Activated CD8-positive, alpha-beta T cell treated with anti-CD3 and anti-CD28 coated beads, Interleukin-2, amount 10 ng/mL, durations not matched to agents 7 days and 5 days (primary cell): ENCODE measurements at regions of chr11 and their contacts with region 1.

Region 1: DNA sequence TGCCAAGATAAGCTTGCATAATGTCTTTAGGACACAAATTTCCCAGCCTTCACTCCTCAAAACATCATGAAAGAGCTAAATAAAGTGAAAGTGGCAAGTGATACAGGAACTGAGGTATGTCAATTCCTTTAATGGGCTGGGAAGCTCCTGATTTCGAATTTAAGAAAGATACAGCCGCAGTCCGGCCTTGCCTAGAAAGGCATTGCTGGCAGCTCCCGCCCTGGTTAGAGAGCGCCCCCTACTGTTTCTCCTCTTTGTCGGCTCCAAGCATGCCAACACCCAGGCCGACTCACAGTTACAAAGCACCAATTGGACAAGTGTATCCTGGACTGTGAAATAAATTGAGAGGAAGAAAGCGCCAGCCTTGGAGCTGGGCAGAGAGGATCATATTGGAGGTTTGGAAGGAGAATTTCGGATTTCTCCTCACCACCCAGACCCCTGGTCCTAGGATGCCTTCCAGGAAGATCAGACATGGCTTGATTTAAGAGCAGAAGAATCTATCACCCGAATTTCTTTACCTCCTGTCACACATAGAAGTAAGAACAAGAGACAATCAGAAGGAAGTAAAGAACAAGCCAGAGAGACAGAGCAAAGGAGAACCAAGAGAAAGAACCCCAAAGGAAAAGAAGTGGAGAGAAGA is 84.0 kb downstream of the FAM76B start:
- DNase-seq: peak; percentile 92
- ATAC-seq: peak; percentile 91
- H3K4me3 Mint-ChIP-seq: no peak overlapping the region
- H3K27ac Mint-ChIP-seq: no peak overlapping the region
- H3K4me1 Mint-ChIP-seq: peaks cover 9% of the 10 kb centered on the region
- H3K27me3 Mint-ChIP-seq: no peaks in the 10 kb centered on the region

Region 2: DNA sequence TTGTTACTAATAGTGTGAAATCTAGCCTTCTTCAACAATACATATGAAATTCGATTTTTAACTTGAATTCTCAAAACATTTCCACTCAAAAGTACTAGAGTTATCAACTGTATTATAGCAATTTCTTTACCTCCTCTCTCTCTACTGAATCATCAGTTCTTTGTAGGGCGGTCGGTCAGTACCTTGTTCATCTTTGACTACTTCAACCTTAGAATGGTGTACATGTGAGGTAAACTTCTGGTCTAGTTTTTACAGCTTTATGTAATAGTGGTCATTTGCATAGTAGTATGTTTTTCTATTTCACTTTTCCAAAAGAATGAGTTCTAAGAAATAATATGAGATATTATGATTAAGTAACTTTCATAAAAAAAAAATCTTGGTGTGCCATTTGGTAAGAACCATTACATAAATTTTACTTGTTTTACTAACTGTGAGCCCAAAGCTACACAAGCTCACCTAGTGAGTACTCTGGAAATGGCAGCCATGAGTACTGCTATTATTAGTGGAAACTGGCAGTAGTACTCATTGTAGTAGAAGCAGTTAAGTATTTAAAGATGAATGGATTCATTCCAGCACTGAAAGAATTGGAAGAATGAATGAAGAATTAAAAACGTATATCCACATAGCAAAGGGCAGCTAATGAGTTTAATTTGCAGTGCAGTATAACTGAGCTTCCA is 504.7 kb before region 1 on chr11:
- CTCF ChIA-PET with region 1: interaction called, 11 read pairs
- POLR2A ChIA-PET with region 1: no interaction called
- DNase-seq: no peak
- ATAC-seq: no peak
- H3K4me3 Mint-ChIP-seq: no peak overlapping the region
- H3K27ac Mint-ChIP-seq: no peak overlapping the region
- H3K4me1 Mint-ChIP-seq: peaks cover 3% of the 10 kb centered on the region
- H3K27me3 Mint-ChIP-seq: no peaks in the 10 kb centered on the region

Region 3: GRCh38 chr11:95371153-95371552 is 334.5 kb before region 1 on chr11:
- CTCF ChIA-PET with region 1: interaction called, 12 read pairs
- POLR2A ChIA-PET with region 1: no interaction called
- DNase-seq: no peak
- ATAC-seq: no peak
- H3K4me3 Mint-ChIP-seq: no peak overlapping the region
- H3K27ac Mint-ChIP-seq: no peak overlapping the region
- H3K4me1 Mint-ChIP-seq: no peaks in the 10 kb centered on the region
- H3K27me3 Mint-ChIP-seq: peaks cover 11% of the 10 kb centered on the region

Region 4: DNA sequence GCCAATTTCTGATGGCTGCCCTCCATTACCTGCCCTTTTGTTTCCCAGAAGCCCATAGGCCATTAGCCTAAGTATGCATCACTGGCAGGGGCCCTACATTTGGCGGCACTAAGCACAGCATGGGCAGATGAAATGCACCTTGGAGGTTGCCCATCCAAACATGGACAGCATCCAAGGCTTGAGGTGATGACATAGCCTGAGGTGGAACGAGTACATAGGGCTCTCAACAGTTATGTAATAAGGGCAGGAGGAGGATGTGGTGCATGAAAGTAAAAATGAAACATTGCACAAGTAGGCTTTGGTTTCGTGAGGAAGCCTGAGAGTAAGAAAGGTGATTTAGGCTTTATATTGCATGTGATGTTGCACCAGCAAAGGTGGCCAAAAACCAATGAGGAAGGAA is 64.1 kb before region 1 on chr11:
- CTCF ChIA-PET with region 1: interaction called, 17 read pairs
- POLR2A ChIA-PET with region 1: no interaction called
- DNase-seq: peak; percentile 60
- ATAC-seq: peak; percentile 92
- H3K4me3 Mint-ChIP-seq: no peak overlapping the region
- H3K27ac Mint-ChIP-seq: peak overlapping the region; percentile 89
- H3K4me1 Mint-ChIP-seq: peaks cover 21% of the 10 kb centered on the region
- H3K27me3 Mint-ChIP-seq: no peaks in the 10 kb centered on the region

Region 5: GRCh38 chr11:95715777-95716241 is 10.2 kb after region 1 on chr11:
- CTCF ChIA-PET with region 1: interaction called, 41 read pairs
- POLR2A ChIA-PET with region 1: no interaction called
- DNase-seq: peak; percentile 34
- ATAC-seq: peak; percentile 70
- H3K4me3 Mint-ChIP-seq: no peak overlapping the region
- H3K27ac Mint-ChIP-seq: no peak overlapping the region
- H3K4me1 Mint-ChIP-seq: peaks cover 24% of the 10 kb centered on the region
- H3K27me3 Mint-ChIP-seq: no peaks in the 10 kb centered on the region

Region 6: DNA sequence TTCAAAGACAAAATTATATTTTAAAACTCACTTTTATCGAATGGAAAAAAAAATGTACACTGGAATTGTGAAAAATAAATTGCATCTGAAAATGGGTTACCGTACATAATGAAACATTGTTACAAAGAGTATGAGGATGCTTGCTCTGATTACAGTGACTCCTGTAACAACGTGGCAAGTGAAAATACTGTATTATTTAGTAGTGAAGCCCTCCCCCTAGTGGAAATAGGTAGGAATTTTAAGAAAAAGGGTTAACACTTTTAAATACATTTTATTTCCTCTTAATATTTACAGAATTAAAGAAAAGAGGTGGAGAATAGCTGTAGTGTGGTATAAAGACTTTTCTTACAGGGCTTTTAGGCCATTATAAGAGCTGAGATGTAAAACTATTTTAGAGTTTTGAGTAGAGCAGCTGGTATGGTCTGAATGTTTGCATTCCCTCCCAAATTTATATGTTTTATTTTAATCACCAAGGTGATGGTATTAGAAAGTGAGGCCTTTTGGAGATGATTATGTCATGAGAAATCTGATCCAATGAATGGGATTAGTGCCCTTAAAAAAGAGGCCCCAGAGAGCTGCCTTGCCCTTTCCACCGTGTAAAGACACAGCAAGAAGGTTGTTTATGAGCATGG is 58.8 kb after region 1 on chr11:
- CTCF ChIA-PET with region 1: interaction called, 14 read pairs
- POLR2A ChIA-PET with region 1: no interaction called
- DNase-seq: no peak
- ATAC-seq: peak; percentile 84
- H3K4me3 Mint-ChIP-seq: no peak overlapping the region
- H3K27ac Mint-ChIP-seq: no peak overlapping the region
- H3K4me1 Mint-ChIP-seq: no peaks in the 10 kb centered on the region
- H3K27me3 Mint-ChIP-seq: peaks cover 3% of the 10 kb centered on the region

Region 7: GRCh38 chr11:95845168-95845567 is 139.6 kb after region 1 on chr11:
- CTCF ChIA-PET with region 1: no interaction called
- POLR2A ChIA-PET with region 1: no interaction called
- DNase-seq: no peak
- ATAC-seq: no peak
- H3K4me3 Mint-ChIP-seq: no peak overlapping the region
- H3K27ac Mint-ChIP-seq: no peak overlapping the region
- H3K4me1 Mint-ChIP-seq: no peaks in the 10 kb centered on the region
- H3K27me3 Mint-ChIP-seq: no peaks in the 10 kb centered on the region